GM12878 (cell line): ENCODE measurements at regions of chr4 and their contacts with region 1.

Region 1: GRCh38 chr4:72302981-72303704 is 265.9 kb downstream of the ADAMTS3 start:
- DNase-seq: no peak
- ATAC-seq: peak; percentile 99
- H3K4me3 ChIP-seq: no peak overlapping the region
- H3K27ac ChIP-seq: no peak overlapping the region
- H3K4me1 ChIP-seq: no peaks in the 10 kb centered on the region
- H3K27me3 ChIP-seq: no peaks in the 10 kb centered on the region
- CTCF ChIP-seq: peak; percentile 63 to 69 (median 69)
- EP300 ChIP-seq: no peak
- POLR2A ChIP-seq: no peak
- RAD21 ChIP-seq: peak; percentile 67

Region 2: DNA sequence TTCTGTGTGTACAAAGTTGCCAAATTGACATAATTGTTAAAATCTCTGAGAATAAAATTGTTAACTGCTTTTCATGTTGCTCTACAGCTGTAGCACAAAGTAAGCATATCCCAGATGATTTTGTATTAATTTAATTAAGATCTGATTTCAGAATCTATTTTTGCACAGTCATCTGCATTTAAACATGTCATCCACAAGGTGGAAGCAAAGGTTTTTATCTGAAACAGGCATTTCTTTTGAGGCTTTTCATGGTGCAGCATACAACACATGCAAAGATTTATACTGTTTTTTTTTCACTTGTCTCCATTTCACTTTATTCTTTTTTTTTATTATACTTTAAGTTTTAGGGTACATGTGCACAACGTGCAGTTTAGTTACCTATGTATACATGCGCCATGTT is 570.4 kb before region 1 on chr4:
- CTCF ChIA-PET with region 1: interaction called, 4 read pairs
- POLR2A ChIA-PET with region 1: no interaction called
- RAD21 ChIA-PET with region 1: interaction called, 3 read pairs
- SMC1A ChIA-PET with region 1: no interaction called
- in situ Hi-C with region 1: no loop called
- intact Hi-C with region 1: loop called (anchors 1 kb)
- DNase-seq: no peak
- ATAC-seq: no peak
- H3K4me3 ChIP-seq: no peak overlapping the region
- H3K27ac ChIP-seq: no peak overlapping the region
- H3K4me1 ChIP-seq: no peaks in the 10 kb centered on the region
- H3K27me3 ChIP-seq: no peaks in the 10 kb centered on the region
- CTCF ChIP-seq: peak; percentile 11 to 48 (median 17); a peak in 3 of 6 replicates
- EP300 ChIP-seq: no peak
- POLR2A ChIP-seq: no peak
- RAD21 ChIP-seq: peak; percentile 81

Region 3: GRCh38 chr4:72205826-72206225 is 97.3 kb before region 1 on chr4:
- CTCF ChIA-PET with region 1: no interaction called
- POLR2A ChIA-PET with region 1: no interaction called
- RAD21 ChIA-PET with region 1: no interaction called
- SMC1A ChIA-PET with region 1: no interaction called
- in situ Hi-C with region 1: no loop called
- intact Hi-C with region 1: no loop called
- DNase-seq: no peak
- ATAC-seq: no peak
- H3K4me3 ChIP-seq: no peak overlapping the region
- H3K27ac ChIP-seq: no peak overlapping the region
- H3K4me1 ChIP-seq: no peaks in the 10 kb centered on the region
- H3K27me3 ChIP-seq: no peaks in the 10 kb centered on the region
- CTCF ChIP-seq: no peak
- EP300 ChIP-seq: no peak
- POLR2A ChIP-seq: no peak
- RAD21 ChIP-seq: no peak

Region 4: DNA sequence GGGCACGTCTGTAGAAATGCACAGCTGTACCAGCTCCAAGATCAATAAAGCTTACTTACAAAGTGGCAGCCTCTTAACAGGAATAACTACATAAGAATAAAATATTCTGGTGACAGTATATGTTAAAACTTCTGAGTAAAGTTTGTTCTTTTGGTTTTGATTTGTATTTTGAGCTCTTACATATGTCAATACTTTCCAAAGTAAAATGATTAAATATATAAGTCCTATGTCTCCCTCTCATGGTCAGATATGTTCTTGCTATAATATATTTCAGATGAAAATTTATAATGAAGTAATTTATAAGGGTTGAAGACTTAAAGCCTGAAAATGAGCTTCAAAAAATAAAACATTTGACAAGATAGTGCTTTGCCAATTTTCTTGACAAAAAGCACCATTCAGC is 17.0 kb before region 1 on chr4:
- CTCF ChIA-PET with region 1: interaction called, 12 read pairs
- POLR2A ChIA-PET with region 1: no interaction called
- RAD21 ChIA-PET with region 1: interaction called, 5 read pairs
- SMC1A ChIA-PET with region 1: interaction called, 22 read pairs
- in situ Hi-C with region 1: no loop called
- intact Hi-C with region 1: no loop called
- DNase-seq: no peak
- ATAC-seq: no peak
- H3K4me3 ChIP-seq: no peak overlapping the region
- H3K27ac ChIP-seq: no peak overlapping the region
- H3K4me1 ChIP-seq: no peaks in the 10 kb centered on the region
- H3K27me3 ChIP-seq: no peaks in the 10 kb centered on the region
- CTCF ChIP-seq: no peak; a peak in 1 of 6 replicates
- EP300 ChIP-seq: no peak
- POLR2A ChIP-seq: no peak
- RAD21 ChIP-seq: peak; percentile 23; the same call in 1 of the 2 replicates

Region 5: DNA sequence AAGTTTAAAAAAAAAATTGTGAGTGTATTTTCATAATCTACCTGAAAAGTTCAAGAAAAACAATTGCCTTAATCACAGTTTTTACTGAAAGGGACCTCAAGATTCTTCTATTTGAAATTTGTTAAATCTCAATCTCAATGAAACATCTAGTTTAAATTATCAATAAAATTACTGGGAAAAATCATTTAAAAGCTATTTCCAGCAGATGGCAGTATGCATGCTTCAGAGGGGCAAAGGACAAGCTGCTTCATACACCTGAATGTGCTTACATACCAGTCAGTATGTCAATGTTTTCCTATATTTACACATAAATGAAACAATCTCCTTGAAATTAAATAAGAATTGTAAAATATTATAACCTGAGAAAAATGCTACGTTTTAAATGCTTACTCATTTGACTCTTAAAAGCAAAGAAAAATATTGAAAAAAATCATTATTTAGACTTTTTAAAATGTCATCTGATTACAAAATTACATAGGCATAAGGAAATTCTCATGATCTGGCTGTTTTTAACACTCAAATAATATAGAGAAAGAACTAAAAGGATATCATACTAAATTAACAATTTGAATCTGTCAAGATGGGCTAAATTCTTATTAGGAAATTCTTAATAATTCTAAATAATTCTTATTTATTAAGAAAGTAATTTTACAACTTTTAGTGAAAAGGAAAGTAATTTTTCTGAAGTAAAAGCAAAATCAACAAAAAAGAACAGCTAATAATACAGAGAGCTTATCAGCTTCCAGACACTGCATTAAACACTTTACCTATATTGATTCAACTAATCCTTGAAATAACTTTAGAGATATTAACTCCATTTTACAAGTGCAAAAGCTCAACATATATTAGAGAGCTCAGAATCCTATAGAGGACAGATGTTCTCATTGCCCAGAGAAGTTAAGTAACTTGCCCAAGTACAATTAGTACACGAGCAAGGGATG is 23.8 kb after region 1 on chr4:
- CTCF ChIA-PET with region 1: interaction called, 39 read pairs
- POLR2A ChIA-PET with region 1: no interaction called
- RAD21 ChIA-PET with region 1: interaction called, 3 read pairs
- SMC1A ChIA-PET with region 1: interaction called, 3 read pairs
- in situ Hi-C with region 1: no loop called
- intact Hi-C with region 1: no loop called
- DNase-seq: no peak
- ATAC-seq: peak; percentile 48; the same call in 2 of the 3 replicates
- H3K4me3 ChIP-seq: no peak overlapping the region
- H3K27ac ChIP-seq: no peak overlapping the region
- H3K4me1 ChIP-seq: no peaks in the 10 kb centered on the region
- H3K27me3 ChIP-seq: no peaks in the 10 kb centered on the region
- CTCF ChIP-seq: peak; percentile 31 to 43 (median 38); a peak in 4 of 6 replicates
- EP300 ChIP-seq: no peak
- POLR2A ChIP-seq: no peak
- RAD21 ChIP-seq: peak; percentile 47